ENCODE measurements at regions of chr2 and their contacts with region 1.

Region 1: DNA sequence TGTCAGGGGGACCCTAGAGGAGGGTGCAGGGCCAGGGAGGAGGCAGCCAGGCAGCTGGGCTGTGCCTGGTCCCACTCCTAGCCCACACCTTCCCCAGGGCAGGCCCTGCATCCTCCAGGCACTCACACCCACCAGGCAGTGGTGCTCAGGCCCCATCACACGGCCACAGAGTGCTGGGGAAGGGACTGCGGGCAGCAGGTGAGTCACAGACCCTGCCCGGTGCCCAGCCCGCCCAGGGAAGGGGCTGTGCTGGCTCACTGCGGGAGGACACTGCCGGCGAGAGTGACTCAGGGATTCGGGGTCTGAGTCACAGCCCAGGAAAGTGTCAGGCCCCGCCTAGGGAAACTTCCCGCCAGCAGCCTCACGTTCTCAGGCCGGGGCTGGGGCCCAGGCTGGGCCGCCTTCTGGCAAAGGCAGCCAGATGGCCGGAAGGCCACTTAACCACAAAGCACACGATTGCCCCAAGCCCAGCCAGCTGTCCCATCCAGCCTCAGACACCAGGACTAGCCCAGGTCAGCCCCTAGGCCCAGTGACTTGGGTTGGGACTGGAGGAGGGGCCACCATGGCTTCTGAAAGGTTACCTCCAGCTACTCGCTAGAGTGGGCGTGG is 42.2 kb downstream of the BIN1 start:
- DNase-seq: peak; percentile 97
- ATAC-seq: peak; percentile 93
- H3K4me3 ChIP-seq: no peak overlapping the region
- H3K27ac ChIP-seq: peak overlapping the region; percentile 78
- H3K4me1 ChIP-seq: peaks cover 16% of the 10 kb centered on the region
- H3K27me3 ChIP-seq: no peaks in the 10 kb centered on the region
- CTCF ChIP-seq: peak; percentile 60
- POLR2A ChIP-seq: peak; percentile 62
- RAD21 ChIP-seq: peak; percentile 73

Region 2: GRCh38 chr2:127174136-127174535 is 109.4 kb after region 1 on chr2:
- CTCF ChIA-PET with region 1: interaction called, 3 read pairs
- POLR2A ChIA-PET with region 1: no interaction called
- dilution Hi-C with region 1: no loop called
- in situ Hi-C with region 1: loop called (anchors 10 kb)
- intact Hi-C with region 1: loop called (anchors 1 kb)
- DNase-seq: peak; percentile 56
- ATAC-seq: peak; percentile 33; the same call in 1 of the 2 replicates
- H3K4me3 ChIP-seq: no peak overlapping the region
- H3K27ac ChIP-seq: no peak overlapping the region
- H3K4me1 ChIP-seq: peaks cover 20% of the 10 kb centered on the region
- H3K27me3 ChIP-seq: no peaks in the 10 kb centered on the region
- CTCF ChIP-seq: peak; percentile 39
- POLR2A ChIP-seq: no peak
- RAD21 ChIP-seq: peak; percentile 65

Measured in IMR-90 (cell line).